Activated CD4-positive, alpha-beta T cell treated with anti-CD3 and anti-CD28 coated beads, Interleukin-2, amount 10 ng/mL, durations not matched to agents 24 days and 14 days (primary cell): ENCODE measurements at regions of chr7 and their contacts with region 1.

Region 1: GRCh38 chr7:2757904-2758672 is 70.1 kb downstream of the AMZ1 start:
- DNase-seq: peak; percentile 90
- H3K4me3 Mint-ChIP-seq: peak overlapping the region; percentile 56
- H3K27ac Mint-ChIP-seq: peak overlapping the region; percentile 95
- H3K4me1 Mint-ChIP-seq: peaks cover 41% of the 10 kb centered on the region
- H3K27me3 Mint-ChIP-seq: no peaks in the 10 kb centered on the region

Region 2: DNA sequence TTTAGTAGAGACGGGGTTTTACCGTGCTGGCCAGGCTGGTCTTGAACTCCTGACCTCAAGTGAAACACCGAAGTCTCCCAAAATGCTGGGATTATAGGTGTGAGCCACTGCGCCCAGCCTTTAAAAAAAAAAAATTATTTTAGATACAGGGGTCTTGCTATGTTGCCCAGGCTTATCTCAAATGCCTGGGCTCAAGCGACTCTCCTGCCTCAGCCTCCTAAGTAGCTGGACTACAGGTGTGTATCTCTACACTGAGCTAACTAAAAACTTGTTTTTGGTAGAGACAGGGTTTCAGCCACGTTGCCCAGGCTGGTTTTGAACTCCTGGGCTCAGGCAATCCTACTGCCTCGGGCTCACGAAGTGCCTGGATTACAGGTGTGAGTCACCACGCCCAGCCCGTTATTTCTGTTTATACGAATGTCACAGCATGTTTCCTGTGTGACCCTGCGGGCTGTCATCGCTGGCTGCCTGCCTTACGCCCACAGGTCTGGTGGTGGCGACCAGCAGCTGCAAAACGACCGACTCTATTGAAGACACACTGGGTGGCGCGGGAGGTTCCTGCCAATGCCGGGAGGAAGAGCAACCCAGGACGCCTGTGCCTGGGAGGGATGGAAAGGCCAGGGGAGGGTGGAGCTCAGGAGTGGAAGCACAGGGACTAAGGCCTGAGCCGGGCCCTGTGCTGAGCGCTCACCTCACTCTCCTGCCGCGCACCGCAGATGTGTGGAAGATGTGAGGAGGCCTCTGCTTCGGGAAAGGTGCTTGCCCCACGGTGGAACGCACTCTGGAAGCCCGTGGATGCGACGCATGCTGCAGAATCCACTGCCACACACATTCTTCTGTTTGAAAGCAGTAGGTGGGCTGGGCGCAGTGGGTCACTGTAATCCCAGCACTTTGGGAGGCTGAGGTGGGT is 37.3 kb before region 1 on chr7:
- intact Hi-C with region 1: loop called (anchors 2 kb)
- DNase-seq: peak; percentile 86
- H3K4me3 Mint-ChIP-seq: peak overlapping the region; percentile 40
- H3K27ac Mint-ChIP-seq: peak overlapping the region; percentile 83
- H3K4me1 Mint-ChIP-seq: peaks cover 42% of the 10 kb centered on the region
- H3K27me3 Mint-ChIP-seq: no peaks in the 10 kb centered on the region

Region 3: DNA sequence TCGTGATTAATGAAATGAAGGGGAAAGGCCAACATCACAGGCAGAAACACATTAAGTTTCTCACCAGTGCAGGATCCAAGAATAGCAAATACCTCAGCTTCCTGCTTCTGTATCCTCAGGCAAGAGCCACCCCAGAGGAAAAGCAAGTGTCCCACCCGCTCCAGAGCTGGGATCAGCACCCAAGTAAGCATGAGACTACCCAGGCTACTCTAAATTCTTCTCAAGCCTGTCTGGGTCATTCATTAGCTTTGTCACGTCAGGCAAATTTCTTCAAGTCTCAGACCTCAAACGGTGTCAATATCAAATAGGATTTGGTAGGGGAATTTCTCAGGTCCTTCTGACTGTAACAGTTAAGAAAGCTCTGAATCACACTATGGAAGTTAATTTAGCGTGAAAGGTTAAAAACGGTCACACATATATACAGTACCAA is 27.0 kb after region 1 on chr7:
- intact Hi-C with region 1: loop called (anchors 1 kb)
- DNase-seq: no peak
- H3K4me3 Mint-ChIP-seq: no peak overlapping the region
- H3K27ac Mint-ChIP-seq: no peak overlapping the region
- H3K4me1 Mint-ChIP-seq: peaks cover 29% of the 10 kb centered on the region
- H3K27me3 Mint-ChIP-seq: no peaks in the 10 kb centered on the region

Region 4: GRCh38 chr7:2844165-2844898 is 86.2 kb after region 1 on chr7 and contains the start of gene GNA12:
- intact Hi-C with region 1: loop called (anchors 2 kb)
- DNase-seq: peak; percentile 100
- H3K4me3 Mint-ChIP-seq: peak within 1 kb of the TSS; percentile 85
- H3K27ac Mint-ChIP-seq: peak within 1 kb of the TSS; percentile 71
- H3K4me1 Mint-ChIP-seq: peaks cover 39% of the 10 kb centered on the region
- H3K27me3 Mint-ChIP-seq: no peaks in the 10 kb centered on the region
- total RNA-seq, gene GNA12: 30.6 and 31.0 TPM in 2 replicates